HepG2 (cell line): ENCODE measurements at regions of chr4 and their contacts with region 1.

Region 1: GRCh38 chr4:67545199-67546003 is at the start of gene CENPC:
- DNase-seq: peak; percentile 96
- ATAC-seq: peak; percentile 99
- H3K4me3 ChIP-seq: peak within 1 kb of the TSS; percentile 94 to 100 (median 96)
- H3K27ac ChIP-seq: peak within 1 kb of the TSS; percentile 96
- H3K4me1 ChIP-seq: peaks cover 36% of the 10 kb centered on the region
- H3K27me3 ChIP-seq: no peaks in the 10 kb centered on the region
- CTCF ChIP-seq: no peak
- EP300 ChIP-seq: no peak; a peak in 1 of 4 replicates
- POLR2A ChIP-seq: peak; percentile 86 to 95
- RAD21 ChIP-seq: no peak
- total RNA-seq, gene CENPC: 15.7 and 16.4 TPM in 2 replicates

Region 2: DNA sequence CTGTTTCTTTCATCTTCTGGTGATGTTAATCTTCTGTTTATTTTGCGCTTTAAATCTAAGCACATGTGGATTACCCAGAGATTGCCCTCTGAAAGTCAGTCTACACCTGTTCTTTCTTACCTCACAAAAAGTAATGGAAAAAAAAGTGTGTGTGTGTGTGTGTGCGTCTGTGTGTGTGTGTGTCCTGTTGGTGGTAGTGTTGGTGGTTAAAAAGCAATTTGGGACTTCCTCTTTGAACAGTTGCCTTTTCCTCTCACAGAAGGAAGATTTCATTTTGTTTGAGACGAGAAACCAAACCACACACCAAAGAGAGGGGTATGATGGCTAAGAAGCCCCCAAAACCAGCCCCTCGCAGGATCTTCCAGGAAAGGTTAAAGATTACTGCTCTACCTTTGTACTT is 13.1 kb after region 1 on chr4 and contains the start of gene STAP1:
- CTCF ChIA-PET with region 1: no interaction called
- POLR2A ChIA-PET with region 1: no interaction called
- in situ Hi-C with region 1: no loop called
- intact Hi-C with region 1: no loop called
- DNase-seq: no peak
- ATAC-seq: no peak
- H3K4me3 ChIP-seq: no peak within 1 kb of the TSS
- H3K27ac ChIP-seq: no peak within 1 kb of the TSS
- H3K4me1 ChIP-seq: no peaks in the 10 kb centered on the region
- H3K27me3 ChIP-seq: no peaks in the 10 kb centered on the region; a peak in 1 of 5 replicates
- CTCF ChIP-seq: no peak
- EP300 ChIP-seq: no peak
- POLR2A ChIP-seq: no peak
- RAD21 ChIP-seq: no peak
- total RNA-seq, gene STAP1: not detected in 2 replicates

Region 3: DNA sequence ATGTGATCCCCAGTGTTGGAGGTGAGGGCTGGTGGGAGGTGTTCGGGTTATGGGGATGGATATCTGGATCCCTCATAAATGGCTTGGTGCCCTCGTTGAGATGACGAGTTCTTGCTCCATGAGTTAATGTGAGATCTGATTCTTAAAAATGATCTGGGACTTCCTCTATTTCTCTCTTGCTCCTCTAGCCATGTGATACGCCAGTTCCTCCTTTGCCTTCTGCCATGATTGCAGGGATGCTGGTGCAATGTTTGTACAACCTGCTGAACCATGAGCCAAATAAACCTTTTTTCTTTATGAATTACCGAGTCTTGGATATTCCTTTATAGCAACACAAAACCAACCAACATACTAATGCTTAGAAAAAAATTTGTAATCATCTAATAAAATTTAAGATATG is 69.7 kb after region 1 on chr4:
- CTCF ChIA-PET with region 1: no interaction called
- POLR2A ChIA-PET with region 1: no interaction called
- in situ Hi-C with region 1: no loop called
- intact Hi-C with region 1: loop called (anchors 5 kb)
- DNase-seq: no peak
- ATAC-seq: no peak
- H3K4me3 ChIP-seq: no peak overlapping the region
- H3K27ac ChIP-seq: no peak overlapping the region
- H3K4me1 ChIP-seq: no peaks in the 10 kb centered on the region
- H3K27me3 ChIP-seq: no peaks in the 10 kb centered on the region
- CTCF ChIP-seq: no peak
- EP300 ChIP-seq: no peak
- POLR2A ChIP-seq: no peak
- RAD21 ChIP-seq: no peak

Region 4: GRCh38 chr4:67700738-67701516 is 155.5 kb after region 1 on chr4 and contains the start of gene UBA6:
- CTCF ChIA-PET with region 1: no interaction called
- POLR2A ChIA-PET with region 1: interaction called, 4 read pairs
- in situ Hi-C with region 1: no loop called
- intact Hi-C with region 1: loop called (anchors 5 kb)
- DNase-seq: peak; percentile 96
- ATAC-seq: peak; percentile 97
- H3K4me3 ChIP-seq: peak within 1 kb of the TSS; percentile 87 to 89 (median 88)
- H3K27ac ChIP-seq: peak within 1 kb of the TSS; percentile 84
- H3K4me1 ChIP-seq: peaks cover 61% of the 10 kb centered on the region
- H3K27me3 ChIP-seq: no peaks in the 10 kb centered on the region
- CTCF ChIP-seq: peak; percentile 50
- EP300 ChIP-seq: peak in 1 of 2 experiments; percentile 40; a peak in 1 of 4 replicates
- POLR2A ChIP-seq: peak; percentile 86 to 89
- RAD21 ChIP-seq: peak; percentile 18; the same call in 1 of the 2 replicates
- total RNA-seq, gene UBA6: 75.4 and 153 TPM in 2 replicates

Region 5: DNA sequence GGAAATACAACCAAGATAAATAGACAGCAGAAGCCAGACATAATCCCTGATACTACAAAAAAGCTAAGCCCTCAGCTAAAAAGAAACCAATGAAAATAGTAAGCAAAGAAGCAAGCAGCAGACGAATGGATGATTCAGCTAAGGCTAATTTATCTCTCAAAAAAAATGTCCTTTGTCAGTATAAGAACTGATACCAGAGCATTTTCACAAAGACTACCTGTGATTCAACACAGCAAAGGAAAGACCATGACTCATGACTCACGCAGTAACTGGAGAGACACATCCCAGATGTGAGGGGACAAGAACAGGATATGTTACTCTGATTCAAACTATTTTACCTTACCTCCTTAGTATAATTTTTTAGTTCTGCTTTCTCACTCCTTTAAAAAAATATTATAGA is 607.0 kb after region 1 on chr4:
- CTCF ChIA-PET with region 1: no interaction called
- POLR2A ChIA-PET with region 1: no interaction called
- in situ Hi-C with region 1: loop called (anchors 25 kb)
- intact Hi-C with region 1: no loop called
- DNase-seq: no peak
- ATAC-seq: no peak
- H3K4me3 ChIP-seq: no peak overlapping the region
- H3K27ac ChIP-seq: no peak overlapping the region
- H3K4me1 ChIP-seq: no peaks in the 10 kb centered on the region
- H3K27me3 ChIP-seq: no peaks in the 10 kb centered on the region
- CTCF ChIP-seq: no peak
- EP300 ChIP-seq: no peak
- POLR2A ChIP-seq: no peak
- RAD21 ChIP-seq: no peak